CD8-positive, alpha-beta T cell (primary cell): ENCODE measurements at regions of chr17 and their contacts with region 1.

Region 1: GRCh38 chr17:45148183-45149036 is at the start of gene HEXIM1:
- DNase-seq: peak; percentile 98 to 100 (median 99)
- ATAC-seq: peak; percentile 80
- H3K4me3 ChIP-seq: peak within 1 kb of the TSS; percentile 68 to 80
- H3K4me3 Mint-ChIP-seq: peak within 1 kb of the TSS; percentile 98
- H3K27ac ChIP-seq: peak within 1 kb of the TSS; percentile 84 to 94
- H3K27ac Mint-ChIP-seq: peak within 1 kb of the TSS; percentile 100
- H3K4me1 ChIP-seq: peaks cover 41% of the 10 kb centered on the region
- H3K4me1 Mint-ChIP-seq: peaks cover 54% of the 10 kb centered on the region
- H3K27me3 ChIP-seq: no peaks in the 10 kb centered on the region
- H3K27me3 Mint-ChIP-seq: no peaks in the 10 kb centered on the region
- CTCF ChIP-seq: no peak
- total RNA-seq, gene HEXIM1: 76.5 to 77.2 TPM

Region 2: GRCh38 chr17:45051060-45051719 is 97.2 kb before region 1 on chr17 and contains the start of gene DCAKD:
- CTCF ChIA-PET with region 1: no interaction called
- POLR2A ChIA-PET with region 1: no interaction called
- intact Hi-C with region 1: loop called in 1 of 2 experiments (anchors 1 kb)
- DNase-seq: peak; percentile 76 to 97 (median 85)
- ATAC-seq: peak; percentile 90
- H3K4me3 ChIP-seq: peak within 1 kb of the TSS; percentile 61 to 82
- H3K4me3 Mint-ChIP-seq: peak within 1 kb of the TSS; percentile 86
- H3K27ac ChIP-seq: peak within 1 kb of the TSS; percentile 78 to 95
- H3K27ac Mint-ChIP-seq: peak within 1 kb of the TSS; percentile 94
- H3K4me1 ChIP-seq: peaks cover 29% of the 10 kb centered on the region
- H3K4me1 Mint-ChIP-seq: peaks cover 36% of the 10 kb centered on the region
- H3K27me3 ChIP-seq: no peaks in the 10 kb centered on the region
- H3K27me3 Mint-ChIP-seq: no peaks in the 10 kb centered on the region
- CTCF ChIP-seq: no peak
- total RNA-seq, gene DCAKD: 8.3 to 8.4 TPM

Region 3: GRCh38 chr17:45161019-45161825 is 12.8 kb after region 1 on chr17:
- CTCF ChIA-PET with region 1: interaction called, 137 read pairs
- POLR2A ChIA-PET with region 1: interaction called, 404 read pairs
- intact Hi-C with region 1: loop called (anchors 1 kb)
- DNase-seq: peak; percentile 96 to 100 (median 98)
- ATAC-seq: peak; percentile 93
- H3K4me3 ChIP-seq: peak overlapping the region; percentile 82 to 84
- H3K4me3 Mint-ChIP-seq: peak overlapping the region; percentile 93
- H3K27ac ChIP-seq: peak overlapping the region; percentile 90 to 97
- H3K27ac Mint-ChIP-seq: peak overlapping the region; percentile 99
- H3K4me1 ChIP-seq: peaks cover 34% of the 10 kb centered on the region
- H3K4me1 Mint-ChIP-seq: peaks cover 40% of the 10 kb centered on the region
- H3K27me3 ChIP-seq: no peaks in the 10 kb centered on the region
- H3K27me3 Mint-ChIP-seq: no peaks in the 10 kb centered on the region
- CTCF ChIP-seq: no peak

Region 4: GRCh38 chr17:45197555-45198334 is 49.3 kb after region 1 on chr17:
- CTCF ChIA-PET with region 1: interaction called, 136 read pairs
- POLR2A ChIA-PET with region 1: interaction called, 37 read pairs
- intact Hi-C with region 1: loop called (anchors 1 kb)
- DNase-seq: peak; percentile 75 to 93 (median 86)
- ATAC-seq: peak; percentile 100
- H3K4me3 ChIP-seq: no peak overlapping the region
- H3K4me3 Mint-ChIP-seq: no peak overlapping the region
- H3K27ac ChIP-seq: no peak overlapping the region
- H3K27ac Mint-ChIP-seq: no peak overlapping the region
- H3K4me1 ChIP-seq: peaks cover 7% of the 10 kb centered on the region
- H3K4me1 Mint-ChIP-seq: peaks cover 4% of the 10 kb centered on the region
- H3K27me3 ChIP-seq: no peaks in the 10 kb centered on the region
- H3K27me3 Mint-ChIP-seq: no peaks in the 10 kb centered on the region
- CTCF ChIP-seq: peak; percentile 85

Region 5: DNA sequence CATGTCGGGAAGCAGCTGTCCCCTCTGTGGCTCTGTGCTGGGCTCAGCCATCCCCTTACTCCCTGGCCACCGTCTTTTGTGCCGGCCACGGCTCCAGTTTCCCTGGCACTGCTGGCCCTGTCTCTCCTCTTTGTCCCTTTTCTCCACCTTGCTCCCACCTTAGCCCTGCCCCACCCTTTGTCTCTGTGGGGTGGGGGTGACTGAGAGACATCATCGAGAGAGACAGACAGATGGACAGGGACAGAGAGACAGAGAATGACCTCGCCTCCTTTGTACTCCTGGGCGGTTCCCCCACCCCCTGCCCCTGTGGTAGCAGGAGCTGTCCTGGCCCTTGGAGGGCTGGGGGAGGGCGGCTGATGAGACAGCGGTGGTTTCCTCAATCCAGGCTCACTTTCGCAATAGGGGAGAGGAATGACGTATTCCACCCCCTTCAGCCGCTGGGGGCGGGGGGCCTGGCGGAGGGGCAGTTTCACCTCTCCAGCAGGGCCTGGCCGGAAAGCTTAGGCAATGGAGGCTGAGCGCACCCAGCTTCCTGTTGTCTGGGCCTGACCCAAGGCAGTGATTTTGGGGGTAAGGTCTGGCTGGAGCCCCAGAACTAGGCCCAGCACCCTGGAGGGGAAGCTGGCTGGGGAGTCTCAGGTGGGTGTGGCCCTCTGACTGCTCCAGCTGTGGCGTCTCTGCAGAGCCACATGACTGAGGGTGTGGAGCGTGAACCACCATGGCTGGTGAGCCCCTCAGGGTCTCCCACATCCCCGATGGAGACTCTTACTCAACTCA is 80.5 kb after region 1 on chr17:
- CTCF ChIA-PET with region 1: interaction called, 6 read pairs
- POLR2A ChIA-PET with region 1: interaction called, 63 read pairs
- intact Hi-C with region 1: loop called (anchors 1 to 2 kb)
- DNase-seq: peak; percentile 60 to 95 (median 83)
- ATAC-seq: peak; percentile 50
- H3K4me3 ChIP-seq: peak overlapping the region; percentile 84 to 97
- H3K4me3 Mint-ChIP-seq: peak overlapping the region; percentile 100
- H3K27ac ChIP-seq: peak overlapping the region; percentile 97
- H3K27ac Mint-ChIP-seq: peak overlapping the region; percentile 100
- H3K4me1 ChIP-seq: peaks cover 93% of the 10 kb centered on the region
- H3K4me1 Mint-ChIP-seq: peaks cover 82% of the 10 kb centered on the region
- H3K27me3 ChIP-seq: no peaks in the 10 kb centered on the region
- H3K27me3 Mint-ChIP-seq: no peaks in the 10 kb centered on the region
- CTCF ChIP-seq: no peak